ENCODE measurements at regions of chr2 and their contacts with region 1.

Region 1: GRCh38 chr2:47867205-47867604 is 39.1 kb downstream of the FBXO11 start:
- DNase-seq: no peak
- H3K4me3 ChIP-seq: no peak overlapping the region
- H3K4me3 Mint-ChIP-seq: peak overlapping the region in 3 of 7 donors; percentile 3 to 35 (median 4)
- H3K27ac ChIP-seq: no peak overlapping the region
- H3K27ac Mint-ChIP-seq: peak overlapping the region; percentile 5 to 77 (median 67)
- H3K4me1 ChIP-seq: peaks cover 68% of the 10 kb centered on the region
- H3K4me1 Mint-ChIP-seq: peaks cover 78 to 99% (median 97%) of the 10 kb centered on the region in 3 donors
- H3K27me3 ChIP-seq: no peaks in the 10 kb centered on the region
- H3K27me3 Mint-ChIP-seq: no peaks in the 10 kb centered on the region

Region 2: GRCh38 chr2:48444404-48444803 is 577.2 kb after region 1 on chr2:
- CTCF ChIA-PET with region 1: no interaction called
- POLR2A ChIA-PET with region 1: interaction called, 10 read pairs
- DNase-seq: no peak
- H3K4me3 ChIP-seq: no peak overlapping the region
- H3K4me3 Mint-ChIP-seq: no peak overlapping the region
- H3K27ac ChIP-seq: no peak overlapping the region
- H3K27ac Mint-ChIP-seq: peak overlapping the region in 2 of 8 donors; percentile 39 to 46
- H3K4me1 ChIP-seq: peaks cover 60% of the 10 kb centered on the region
- H3K4me1 Mint-ChIP-seq: peaks cover 27 to 46% (median 44%) of the 10 kb centered on the region in 3 donors
- H3K27me3 ChIP-seq: no peaks in the 10 kb centered on the region
- H3K27me3 Mint-ChIP-seq: peaks cover 0 to 4% of the 10 kb centered on the region in 2 donors